ENCODE measurements at regions of chr15 and their contacts with region 1.

Region 1: GRCh38 chr15:55255714-55256113 is 33.9 kb downstream of the RAB27A start:
- DNase-seq: no peak
- H3K4me3 Mint-ChIP-seq: peak overlapping the region; percentile 75
- H3K27ac Mint-ChIP-seq: peak overlapping the region; percentile 82
- H3K4me1 Mint-ChIP-seq: peaks cover 74% of the 10 kb centered on the region
- H3K27me3 Mint-ChIP-seq: no peaks in the 10 kb centered on the region

Region 2: DNA sequence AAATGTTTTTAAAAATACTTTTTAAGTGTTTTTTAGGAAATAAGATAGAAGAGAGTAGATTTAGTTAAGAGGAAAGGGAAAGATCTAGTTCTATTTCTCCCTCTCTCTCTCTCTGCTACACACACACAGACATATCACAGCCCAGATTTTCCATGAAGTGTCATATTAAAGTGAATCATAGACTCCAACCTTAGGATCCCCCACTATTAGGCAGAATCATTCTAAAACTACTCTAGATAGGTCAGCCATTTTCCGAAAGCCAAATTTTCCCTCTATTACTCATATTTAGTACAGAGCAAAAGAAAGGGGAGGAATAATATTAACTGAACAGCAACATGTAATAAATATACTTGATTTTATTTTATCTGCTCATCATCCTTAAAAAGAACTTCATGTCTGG is 13.8 kb before region 1 on chr15:
- intact Hi-C with region 1: loop called (anchors 1 kb)
- DNase-seq: no peak
- H3K4me3 Mint-ChIP-seq: no peak overlapping the region
- H3K27ac Mint-ChIP-seq: peak overlapping the region; percentile 41
- H3K4me1 Mint-ChIP-seq: peaks cover 76% of the 10 kb centered on the region
- H3K27me3 Mint-ChIP-seq: no peaks in the 10 kb centered on the region

Region 3: GRCh38 chr15:55267401-55268175 is 11.9 kb after region 1 on chr15:
- intact Hi-C with region 1: loop called (anchors 1 kb)
- DNase-seq: peak; percentile 57
- H3K4me3 Mint-ChIP-seq: peak overlapping the region; percentile 72
- H3K27ac Mint-ChIP-seq: peak overlapping the region; percentile 96
- H3K4me1 Mint-ChIP-seq: peaks cover 78% of the 10 kb centered on the region
- H3K27me3 Mint-ChIP-seq: no peaks in the 10 kb centered on the region